H1 (cell line): ENCODE measurements at regions of chr15 and their contacts with region 1.

Region 1: GRCh38 chr15:33086507-33087121 is 107.9 kb downstream of the FMN1 start:
- DNase-seq: no peak
- H3K4me3 ChIP-seq: no peak overlapping the region
- H3K27ac ChIP-seq: no peak overlapping the region
- H3K4me1 ChIP-seq: peaks cover 0 to 15% (median 6%) of the 10 kb centered on the region in 4 experiments; a peak in 5 of 7 replicates
- H3K27me3 ChIP-seq: no peaks in the 10 kb centered on the region
- CTCF ChIP-seq: peak in 2 of 3 experiments; percentile 30 to 52; a peak in 2 of 4 replicates
- EP300 ChIP-seq: no peak
- POLR2A ChIP-seq: no peak
- RAD21 ChIP-seq: peak; percentile 77

Region 2: GRCh38 chr15:33074942-33075341 is 11.7 kb before region 1 on chr15:
- CTCF ChIA-PET with region 1: interaction called, 18 read pairs
- POLR2A ChIA-PET with region 1: interaction called, 4 read pairs
- DNase-seq: no peak
- H3K4me3 ChIP-seq: no peak overlapping the region
- H3K27ac ChIP-seq: no peak overlapping the region
- H3K4me1 ChIP-seq: no peaks in the 10 kb centered on the region
- H3K27me3 ChIP-seq: no peaks in the 10 kb centered on the region
- CTCF ChIP-seq: peak in 2 of 3 experiments; percentile 50 to 55; a peak in 3 of 4 replicates
- EP300 ChIP-seq: no peak
- POLR2A ChIP-seq: no peak
- RAD21 ChIP-seq: peak; percentile 69 to 75

Region 3: GRCh38 chr15:33104212-33104611 is 17.6 kb after region 1 on chr15:
- CTCF ChIA-PET with region 1: interaction called, 14 read pairs
- POLR2A ChIA-PET with region 1: no interaction called
- DNase-seq: no peak
- H3K4me3 ChIP-seq: no peak overlapping the region
- H3K27ac ChIP-seq: no peak overlapping the region
- H3K4me1 ChIP-seq: no peaks in the 10 kb centered on the region
- H3K27me3 ChIP-seq: no peaks in the 10 kb centered on the region
- CTCF ChIP-seq: no peak
- EP300 ChIP-seq: no peak
- POLR2A ChIP-seq: no peak
- RAD21 ChIP-seq: no peak

Region 4: DNA sequence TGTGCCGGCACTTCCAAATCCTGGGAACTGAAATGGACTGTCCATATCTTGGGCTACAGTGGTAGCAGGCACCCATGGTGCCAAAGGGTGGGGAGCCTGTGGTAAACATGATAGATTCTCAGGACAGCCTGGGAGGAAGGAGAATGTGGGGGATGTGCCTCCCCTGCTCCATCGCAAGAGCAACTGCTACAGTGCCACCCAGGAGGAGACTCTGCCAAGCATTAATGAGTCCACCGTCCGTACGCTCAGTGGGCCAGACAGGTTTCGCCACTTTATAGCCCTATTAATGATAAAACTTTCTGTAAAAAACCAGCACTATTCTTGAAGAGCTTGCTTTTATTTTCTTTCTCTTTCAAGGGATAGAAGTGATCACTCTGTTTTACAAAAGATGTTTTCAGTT is 32.7 kb after region 1 on chr15:
- CTCF ChIA-PET with region 1: interaction called, 18 read pairs
- POLR2A ChIA-PET with region 1: interaction called, 4 read pairs
- DNase-seq: no peak
- H3K4me3 ChIP-seq: no peak overlapping the region
- H3K27ac ChIP-seq: no peak overlapping the region
- H3K4me1 ChIP-seq: peaks cover 0 to 7% (median 0%) of the 10 kb centered on the region in 4 experiments; a peak in 2 of 7 replicates
- H3K27me3 ChIP-seq: no peaks in the 10 kb centered on the region
- CTCF ChIP-seq: no peak
- EP300 ChIP-seq: no peak
- POLR2A ChIP-seq: no peak
- RAD21 ChIP-seq: no peak

Region 5: GRCh38 chr15:33132722-33133345 is 46.2 kb after region 1 on chr15:
- CTCF ChIA-PET with region 1: interaction called, 161 read pairs
- POLR2A ChIA-PET with region 1: no interaction called
- DNase-seq: peak in 1 of 2 experiments; percentile 27
- H3K4me3 ChIP-seq: no peak overlapping the region
- H3K27ac ChIP-seq: no peak overlapping the region
- H3K4me1 ChIP-seq: no peaks in the 10 kb centered on the region
- H3K27me3 ChIP-seq: no peaks in the 10 kb centered on the region
- CTCF ChIP-seq: peak in 2 of 3 experiments; percentile 74; a peak in 3 of 4 replicates
- EP300 ChIP-seq: no peak
- POLR2A ChIP-seq: no peak
- RAD21 ChIP-seq: peak; percentile 89 to 94